ENCODE measurements at regions of chr12 and their contacts with region 1.

Region 1: GRCh38 chr12:111434680-111435338 is 29.1 kb downstream of the SH2B3 start:
- DNase-seq: peak; percentile 89
- ATAC-seq: peak; percentile 66
- H3K4me3 Mint-ChIP-seq: peak overlapping the region; percentile 75
- H3K27ac Mint-ChIP-seq: peak overlapping the region; percentile 99
- H3K4me1 Mint-ChIP-seq: peaks cover 97% of the 10 kb centered on the region
- H3K27me3 Mint-ChIP-seq: no peaks in the 10 kb centered on the region

Region 2: DNA sequence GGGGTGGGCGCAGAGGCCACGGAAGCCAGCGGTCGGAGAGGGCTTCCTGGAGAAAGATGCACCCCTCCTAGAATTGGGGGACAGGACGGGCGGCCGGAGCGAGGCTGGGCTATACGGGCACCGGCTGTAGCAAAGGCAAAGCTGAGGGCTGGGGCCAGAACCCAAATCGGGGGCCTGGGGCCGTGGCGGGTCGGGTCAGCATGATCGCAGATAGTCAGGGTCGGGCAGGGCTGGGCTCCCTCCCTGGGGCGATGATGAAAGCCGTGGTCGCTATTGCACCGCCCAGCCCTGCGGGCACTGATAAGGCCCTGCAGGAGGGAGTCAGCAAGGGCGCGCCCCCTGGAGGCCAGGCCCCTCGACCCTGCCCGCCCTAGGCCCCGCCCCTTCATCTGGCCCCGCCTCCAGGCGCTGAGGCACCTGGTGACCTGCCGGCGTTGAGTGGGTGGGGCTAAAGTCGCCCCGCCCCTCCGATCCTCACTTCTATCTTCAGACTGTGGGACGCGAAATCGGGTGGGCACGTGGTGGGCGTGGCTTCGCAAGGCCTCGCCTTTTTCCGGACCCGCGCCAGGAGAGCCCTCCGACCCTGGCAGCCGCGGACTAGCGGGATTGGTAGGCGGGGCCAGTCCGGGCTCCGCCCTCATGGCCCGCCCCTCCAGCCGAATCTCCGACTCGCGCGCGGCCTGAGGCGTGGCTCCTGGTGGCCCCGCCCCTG is 29.5 kb before region 1 on chr12:
- CTCF ChIA-PET with region 1: interaction called, 1,088 read pairs
- POLR2A ChIA-PET with region 1: interaction called, 22 read pairs
- DNase-seq: peak; percentile 100
- ATAC-seq: peak; percentile 75
- H3K4me3 Mint-ChIP-seq: peak overlapping the region; percentile 76
- H3K27ac Mint-ChIP-seq: peak overlapping the region; percentile 90
- H3K4me1 Mint-ChIP-seq: peaks cover 51% of the 10 kb centered on the region
- H3K27me3 Mint-ChIP-seq: no peaks in the 10 kb centered on the region

Region 3: DNA sequence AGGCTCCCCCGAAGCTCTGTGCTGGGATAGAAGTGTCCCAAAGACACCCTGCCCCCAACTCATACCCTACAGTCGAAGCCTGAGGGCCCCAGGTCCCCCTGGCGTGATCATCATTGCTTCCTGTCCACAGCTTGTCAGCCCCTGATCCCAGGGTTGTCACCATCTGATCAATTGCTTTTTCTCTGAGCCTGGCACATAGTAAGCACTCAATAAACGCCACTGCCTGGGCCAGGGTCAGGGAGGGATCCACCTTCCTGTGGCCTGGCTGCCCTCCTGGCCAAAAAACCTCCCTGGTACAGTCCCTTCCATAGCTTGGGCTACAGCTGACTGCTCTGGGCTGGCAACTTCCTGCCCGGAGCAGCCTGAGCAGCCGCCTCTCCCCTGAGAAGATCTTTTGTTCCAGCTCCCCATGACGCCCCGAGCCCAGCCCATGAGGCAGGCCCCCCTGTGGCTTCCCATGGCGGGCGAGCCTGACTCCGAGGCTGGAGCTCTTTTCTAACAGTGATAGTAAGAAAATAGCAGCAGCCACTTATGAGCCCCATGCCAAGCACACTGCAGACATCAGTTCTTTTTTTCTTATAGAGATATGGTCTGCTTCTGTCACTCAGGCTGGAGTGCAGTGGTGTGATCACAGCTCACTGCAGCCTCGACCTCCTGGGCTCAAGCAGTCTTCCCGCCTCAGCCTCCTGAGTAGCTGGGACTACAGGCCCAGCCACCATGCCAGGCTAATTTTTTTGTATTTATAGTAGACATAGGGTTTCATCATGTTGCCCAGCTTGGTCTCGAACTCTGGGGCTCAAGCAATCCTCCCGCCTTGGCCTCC is 22.6 kb before region 1 on chr12:
- CTCF ChIA-PET with region 1: interaction called, 1,088 read pairs
- POLR2A ChIA-PET with region 1: interaction called, 22 read pairs
- DNase-seq: no peak
- ATAC-seq: peak; percentile 59
- H3K4me3 Mint-ChIP-seq: peak overlapping the region; percentile 12
- H3K27ac Mint-ChIP-seq: peak overlapping the region; percentile 91
- H3K4me1 Mint-ChIP-seq: peaks cover 82% of the 10 kb centered on the region
- H3K27me3 Mint-ChIP-seq: no peaks in the 10 kb centered on the region